RWPE1 (cell line): ENCODE measurements at regions of chr6 and their contacts with region 1.

Region 1: DNA sequence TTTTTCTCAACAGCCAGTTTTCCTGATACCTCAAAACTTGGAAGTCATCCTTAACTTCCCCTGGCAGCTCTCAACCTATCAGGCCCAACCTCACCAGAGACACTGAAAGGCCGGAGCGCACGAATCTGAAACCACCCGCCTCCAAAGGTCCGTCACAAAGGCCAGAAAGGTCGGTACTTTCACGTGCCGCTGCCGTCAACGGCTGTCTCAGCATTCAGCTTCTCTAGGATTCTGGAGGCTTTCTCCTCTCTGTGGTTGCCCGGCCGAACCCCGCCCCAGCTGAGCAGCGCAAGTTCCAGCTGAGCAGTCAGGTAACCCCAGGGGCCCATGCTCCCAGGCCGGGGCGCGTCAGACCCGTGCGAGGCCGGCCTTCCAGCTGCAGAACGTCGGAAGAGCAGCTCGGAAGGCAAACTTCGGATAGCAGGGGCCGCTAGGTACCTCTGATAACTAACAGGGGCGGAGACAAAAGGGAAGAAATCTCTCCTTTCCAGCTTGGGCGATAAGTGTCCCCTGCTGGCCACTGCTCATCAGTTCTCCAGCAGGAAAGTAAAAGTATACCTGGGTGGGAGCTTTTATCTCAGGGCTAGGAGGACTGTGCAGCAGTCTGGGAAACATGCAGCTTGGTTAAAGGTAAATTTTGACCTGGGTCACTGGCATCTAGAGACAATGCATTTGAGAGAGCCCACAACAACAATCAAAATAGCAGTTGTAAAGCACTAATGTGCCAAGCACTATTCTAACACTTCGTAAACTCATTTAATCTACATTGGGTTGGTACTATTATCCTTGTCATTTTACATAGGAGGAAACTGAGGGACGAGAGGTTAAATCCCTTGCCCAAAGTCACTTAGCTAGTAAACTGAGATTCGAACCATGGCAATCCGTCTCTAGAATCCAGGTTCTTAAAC is 16.1 kb downstream of the ZSCAN12 start:
- DNase-seq: peak; percentile 82
- H3K27ac ChIP-seq: peak overlapping the region; percentile 80
- CTCF ChIP-seq: peak; percentile 66

Region 2: GRCh38 chr6:28355743-28356665 is 27.5 kb before region 1 on chr6:
- CTCF ChIA-PET with region 1: interaction called, 12 read pairs
- POLR2A ChIA-PET with region 1: no interaction called
- DNase-seq: peak; percentile 66
- H3K27ac ChIP-seq: peak overlapping the region; percentile 84
- CTCF ChIP-seq: peak; percentile 78